GM12878 (cell line): ENCODE measurements at regions of chr11 and their contacts with region 1.

Region 1: DNA sequence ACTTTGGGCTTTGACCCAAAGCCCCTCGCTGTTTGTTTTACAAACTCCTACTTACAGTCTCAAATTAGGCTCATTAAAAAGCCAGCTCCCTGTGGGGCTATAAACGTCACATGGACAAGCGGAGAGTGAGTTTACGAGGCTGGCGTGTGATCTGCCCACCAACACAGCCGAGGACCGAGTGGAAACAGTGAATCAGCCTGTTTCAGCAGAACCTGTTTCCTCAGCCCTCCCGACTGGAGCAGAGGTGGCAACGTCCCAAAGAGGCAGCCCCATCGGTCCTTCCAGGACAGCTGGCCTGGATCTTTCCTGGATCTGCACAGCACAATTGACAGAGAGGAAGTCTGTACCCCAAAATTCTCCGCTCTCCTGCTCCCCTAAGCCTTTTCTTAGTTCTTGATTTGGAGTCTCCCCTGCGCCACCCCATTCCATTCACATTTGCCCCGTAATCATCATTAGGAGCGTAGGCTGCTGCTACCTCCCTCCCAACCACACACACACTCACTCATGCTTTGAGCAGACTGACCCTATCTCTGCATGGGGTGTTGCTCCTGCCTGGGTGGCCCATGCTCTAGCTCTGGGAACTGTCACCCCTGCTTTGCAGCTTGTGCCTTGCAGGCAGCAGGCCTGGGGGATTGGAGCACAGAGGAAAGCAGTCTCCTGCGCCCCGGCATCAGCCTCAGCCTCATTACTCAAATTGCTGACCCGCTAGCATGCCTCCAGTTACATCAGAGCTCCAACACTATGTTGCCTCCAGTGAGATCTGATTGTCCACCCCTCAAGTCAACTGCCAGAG is 117.8 kb downstream of the NAT10 start:
- DNase-seq: no peak
- ATAC-seq: no peak
- H3K4me3 ChIP-seq: no peak overlapping the region
- H3K27ac ChIP-seq: no peak overlapping the region
- H3K4me1 ChIP-seq: no peaks in the 10 kb centered on the region
- H3K27me3 ChIP-seq: no peaks in the 10 kb centered on the region; a peak in 1 of 4 replicates
- CTCF ChIP-seq: no peak
- EP300 ChIP-seq: no peak
- POLR2A ChIP-seq: no peak
- RAD21 ChIP-seq: no peak

Region 2: GRCh38 chr11:34098813-34099212 is 124.4 kb before region 1 on chr11:
- CTCF ChIA-PET with region 1: no interaction called
- POLR2A ChIA-PET with region 1: no interaction called
- RAD21 ChIA-PET with region 1: no interaction called
- SMC1A ChIA-PET with region 1: no interaction called
- in situ Hi-C with region 1: no loop called
- intact Hi-C with region 1: no loop called
- DNase-seq: no peak
- ATAC-seq: no peak
- H3K4me3 ChIP-seq: no peak overlapping the region
- H3K27ac ChIP-seq: no peak overlapping the region
- H3K4me1 ChIP-seq: peaks cover 2% of the 10 kb centered on the region
- H3K27me3 ChIP-seq: no peaks in the 10 kb centered on the region
- CTCF ChIP-seq: no peak
- EP300 ChIP-seq: no peak
- POLR2A ChIP-seq: no peak
- RAD21 ChIP-seq: no peak

Region 3: GRCh38 chr11:34124885-34125668 is 98.1 kb before region 1 on chr11:
- CTCF ChIA-PET with region 1: no interaction called
- POLR2A ChIA-PET with region 1: interaction called, 10 read pairs
- RAD21 ChIA-PET with region 1: no interaction called
- SMC1A ChIA-PET with region 1: no interaction called
- in situ Hi-C with region 1: no loop called
- intact Hi-C with region 1: no loop called
- DNase-seq: no peak
- ATAC-seq: no peak
- H3K4me3 ChIP-seq: no peak overlapping the region
- H3K27ac ChIP-seq: no peak overlapping the region
- H3K4me1 ChIP-seq: no peaks in the 10 kb centered on the region
- H3K27me3 ChIP-seq: no peaks in the 10 kb centered on the region
- CTCF ChIP-seq: no peak
- EP300 ChIP-seq: no peak
- POLR2A ChIP-seq: no peak
- RAD21 ChIP-seq: no peak

Region 4: DNA sequence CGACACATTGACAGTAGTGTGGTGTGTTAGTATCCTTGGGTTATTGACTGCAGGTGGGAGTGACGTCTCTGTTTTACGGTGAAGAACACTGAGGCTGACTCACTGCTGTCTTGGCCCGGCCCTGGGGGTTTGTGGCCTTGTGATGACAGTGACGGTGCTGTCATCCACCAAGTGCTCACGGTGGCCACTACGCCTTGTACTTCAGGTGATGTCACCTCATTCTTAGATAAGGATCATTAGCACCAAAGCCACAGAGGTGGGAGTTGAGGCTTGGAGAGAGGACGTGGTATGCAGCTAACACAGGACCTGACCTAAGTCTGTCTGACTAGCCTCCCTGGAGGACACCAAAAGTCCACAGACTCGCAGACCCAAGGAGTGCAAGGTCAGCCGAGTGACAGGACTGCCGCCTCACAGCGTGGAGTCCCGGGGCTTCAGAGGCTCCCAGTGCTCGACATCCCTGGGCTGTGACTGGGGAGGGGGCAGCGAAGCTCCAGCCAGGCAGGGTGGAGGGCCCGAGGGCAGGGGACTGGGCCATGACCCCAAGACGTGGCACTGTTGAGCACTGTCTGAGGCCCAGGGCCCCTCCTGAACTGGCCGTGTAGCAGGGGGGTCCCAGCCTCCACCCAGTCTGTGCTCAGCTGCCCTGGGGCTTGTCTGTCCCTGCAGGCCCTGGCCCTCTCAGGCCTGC is 61.3 kb before region 1 on chr11:
- CTCF ChIA-PET with region 1: no interaction called
- POLR2A ChIA-PET with region 1: no interaction called
- RAD21 ChIA-PET with region 1: no interaction called
- SMC1A ChIA-PET with region 1: no interaction called
- in situ Hi-C with region 1: no loop called
- intact Hi-C with region 1: no loop called
- DNase-seq: no peak
- ATAC-seq: peak; percentile 77
- H3K4me3 ChIP-seq: no peak overlapping the region
- H3K27ac ChIP-seq: no peak overlapping the region
- H3K4me1 ChIP-seq: no peaks in the 10 kb centered on the region
- H3K27me3 ChIP-seq: no peaks in the 10 kb centered on the region
- CTCF ChIP-seq: no peak
- EP300 ChIP-seq: peak in 1 of 2 experiments; percentile 56; a peak in 2 of 4 replicates
- POLR2A ChIP-seq: no peak
- RAD21 ChIP-seq: no peak

Region 5: GRCh38 chr11:34180040-34180813 is 43.0 kb before region 1 on chr11:
- CTCF ChIA-PET with region 1: interaction called, 19 read pairs
- POLR2A ChIA-PET with region 1: interaction called, 5 read pairs
- RAD21 ChIA-PET with region 1: interaction called, 10 read pairs
- SMC1A ChIA-PET with region 1: interaction called, 5 read pairs
- in situ Hi-C with region 1: no loop called
- intact Hi-C with region 1: no loop called
- DNase-seq: peak; percentile 30
- ATAC-seq: peak; percentile 78
- H3K4me3 ChIP-seq: no peak overlapping the region
- H3K27ac ChIP-seq: 0 out of 2 replicates have a peak overlapping the region, but pooled peaks have one; percentile 16
- H3K4me1 ChIP-seq: peaks cover 29% of the 10 kb centered on the region
- H3K27me3 ChIP-seq: no peaks in the 10 kb centered on the region
- CTCF ChIP-seq: no peak
- EP300 ChIP-seq: no peak
- POLR2A ChIP-seq: no peak
- RAD21 ChIP-seq: no peak

Region 6: GRCh38 chr11:34208266-34209135 is 14.7 kb before region 1 on chr11:
- CTCF ChIA-PET with region 1: interaction called, 6 read pairs
- POLR2A ChIA-PET with region 1: interaction called, 7 read pairs
- RAD21 ChIA-PET with region 1: interaction called, 9 read pairs
- SMC1A ChIA-PET with region 1: interaction called, 16 read pairs
- in situ Hi-C with region 1: no loop called
- intact Hi-C with region 1: no loop called
- DNase-seq: no peak
- ATAC-seq: 0 out of 3 replicates have a peak, but pooled peaks have one; percentile 23
- H3K4me3 ChIP-seq: no peak overlapping the region
- H3K27ac ChIP-seq: no peak overlapping the region
- H3K4me1 ChIP-seq: peaks cover 7% of the 10 kb centered on the region
- H3K27me3 ChIP-seq: no peaks in the 10 kb centered on the region
- CTCF ChIP-seq: no peak
- EP300 ChIP-seq: no peak
- POLR2A ChIP-seq: no peak
- RAD21 ChIP-seq: no peak

Region 7: DNA sequence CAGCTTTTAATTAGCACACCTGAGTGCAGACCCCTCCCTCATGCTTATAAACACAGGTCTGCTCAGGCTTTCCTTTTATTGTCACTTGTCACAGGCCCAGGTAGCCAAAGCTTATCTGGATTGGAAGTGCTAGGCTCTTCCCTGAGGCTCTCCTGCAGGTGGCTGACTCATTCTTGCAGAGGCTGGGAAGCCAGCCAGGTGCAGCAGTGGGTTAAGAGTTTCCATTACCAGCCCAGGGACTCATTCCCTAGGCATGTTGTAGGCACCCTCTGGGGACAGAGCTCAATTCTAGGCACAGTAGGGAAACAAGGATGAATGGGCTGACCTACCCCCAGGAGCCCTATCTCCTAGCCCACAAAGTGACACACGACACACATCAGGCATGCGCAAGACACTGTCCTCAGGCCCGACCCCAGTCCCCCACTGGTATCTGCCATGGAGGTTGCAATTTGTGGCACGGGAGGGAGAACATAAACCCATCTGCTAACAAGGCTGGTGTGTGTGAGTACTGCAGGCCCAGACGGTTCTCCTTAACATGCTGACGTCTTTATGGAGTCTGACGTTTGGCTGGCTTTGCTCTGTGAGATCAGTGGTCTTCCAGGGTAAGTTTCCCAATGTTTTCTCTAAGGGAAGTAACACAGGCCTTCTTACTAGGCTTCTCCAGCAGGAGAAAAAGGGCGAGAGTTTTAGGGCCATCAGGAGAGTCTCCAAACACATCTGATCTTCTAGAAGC is 40.4 kb after region 1 on chr11:
- CTCF ChIA-PET with region 1: no interaction called
- POLR2A ChIA-PET with region 1: no interaction called
- RAD21 ChIA-PET with region 1: no interaction called
- SMC1A ChIA-PET with region 1: no interaction called
- in situ Hi-C with region 1: no loop called
- intact Hi-C with region 1: no loop called
- DNase-seq: no peak
- ATAC-seq: no peak
- H3K4me3 ChIP-seq: no peak overlapping the region
- H3K27ac ChIP-seq: no peak overlapping the region
- H3K4me1 ChIP-seq: no peaks in the 10 kb centered on the region
- H3K27me3 ChIP-seq: no peaks in the 10 kb centered on the region
- CTCF ChIP-seq: no peak
- EP300 ChIP-seq: no peak
- POLR2A ChIP-seq: no peak
- RAD21 ChIP-seq: no peak